ENCODE measurements at regions of chr19 and their contacts with region 1.

Region 1: DNA sequence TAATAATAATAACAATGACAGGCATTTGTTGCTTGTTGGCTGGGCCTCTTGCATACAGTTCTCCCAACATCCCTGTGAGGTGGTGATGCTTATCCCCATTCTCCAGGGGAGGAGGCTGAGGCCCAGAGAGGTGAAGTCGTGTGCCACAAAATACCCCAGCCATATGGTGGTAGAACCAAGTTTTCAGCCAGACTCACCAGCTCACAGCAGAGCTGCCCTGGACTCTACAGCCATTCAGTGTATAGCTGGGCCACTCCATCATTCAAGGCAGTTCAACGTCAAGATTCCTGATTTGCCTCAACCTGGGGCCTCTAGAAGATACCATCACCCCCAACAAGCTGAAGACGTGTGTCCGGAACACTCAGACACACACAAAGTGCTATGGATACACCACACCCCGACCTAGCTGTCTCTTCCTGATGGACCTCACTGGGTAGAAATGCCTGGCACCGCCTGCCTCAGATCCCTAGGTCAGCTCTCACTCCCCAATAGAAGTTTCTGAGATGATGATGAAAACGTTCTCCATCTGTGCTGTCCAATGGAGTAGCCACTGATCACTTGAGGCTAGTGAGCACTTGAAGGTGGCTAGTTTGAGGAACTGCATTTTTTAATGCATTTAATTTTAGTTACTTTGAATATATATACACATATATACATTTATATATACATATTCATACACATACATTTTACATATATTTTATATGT is 4.3 kb upstream of the CEACAM19 start:
- DNase-seq: no peak
- ATAC-seq: 0 out of 2 replicates have a peak, but pooled peaks have one; percentile 22
- H3K4me3 ChIP-seq: no peak overlapping the region
- H3K27ac ChIP-seq: no peak overlapping the region
- H3K4me1 ChIP-seq: no peaks in the 10 kb centered on the region
- H3K27me3 ChIP-seq: no peaks in the 10 kb centered on the region
- CTCF ChIP-seq: no peak

Region 2: GRCh38 chr19:43700395-43701000 is 966.5 kb before region 1 on chr19:
- CTCF ChIA-PET with region 1: no interaction called
- POLR2A ChIA-PET with region 1: no interaction called
- in situ Hi-C with region 1: no loop called
- intact Hi-C with region 1: no loop called
- DNase-seq: no peak
- ATAC-seq: peak; percentile 64
- H3K4me3 ChIP-seq: peak overlapping the region in 1 of 2 experiments; percentile 41; a peak in 3 of 4 replicates
- H3K27ac ChIP-seq: peak overlapping the region; percentile 63
- H3K4me1 ChIP-seq: peaks cover 5% of the 10 kb centered on the region
- H3K27me3 ChIP-seq: no peaks in the 10 kb centered on the region
- CTCF ChIP-seq: no peak

Region 3: DNA sequence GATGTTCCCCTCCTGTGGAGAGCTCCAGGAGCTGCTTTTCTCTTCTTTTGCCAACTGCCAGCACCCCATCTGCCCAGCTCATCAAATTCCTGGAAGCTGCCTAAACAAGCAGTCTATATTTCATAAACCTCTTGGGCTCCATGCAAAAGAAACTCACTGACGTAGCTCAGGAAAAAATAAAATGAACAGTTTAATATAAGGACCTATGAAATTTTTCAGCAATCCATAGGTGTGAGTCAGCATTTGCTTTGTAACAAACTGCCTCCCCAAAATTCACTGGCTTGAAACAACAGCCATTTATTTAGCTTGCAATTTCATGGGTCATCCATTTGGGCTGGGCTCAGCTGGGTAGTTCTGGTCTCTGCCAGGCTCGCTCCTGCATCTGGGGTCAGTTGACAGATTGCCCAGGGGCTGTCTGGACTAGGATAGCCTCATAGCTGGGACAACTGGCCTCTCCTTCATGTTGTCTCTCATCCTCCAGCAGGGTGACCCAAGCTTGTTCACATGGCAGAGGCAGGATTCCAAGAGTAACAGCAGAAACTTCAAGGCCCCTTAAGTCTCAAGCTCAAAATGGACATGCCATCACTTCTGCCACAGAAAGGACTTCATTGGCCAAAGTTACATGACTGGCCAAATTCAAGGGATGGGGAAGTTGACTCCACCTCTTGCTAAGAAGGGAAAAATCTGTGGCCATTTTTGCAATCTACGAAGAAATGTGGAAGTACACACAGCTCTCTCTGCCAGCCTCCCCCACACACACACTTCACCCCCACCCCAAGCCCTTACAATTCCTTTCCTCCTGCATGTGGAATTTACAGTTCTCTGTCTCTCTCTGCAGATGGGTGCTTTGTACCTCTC is 31.2 kb before region 1 on chr19:
- CTCF ChIA-PET with region 1: no interaction called
- POLR2A ChIA-PET with region 1: interaction called, 11 read pairs
- in situ Hi-C with region 1: no loop called
- intact Hi-C with region 1: no loop called
- DNase-seq: no peak
- ATAC-seq: no peak
- H3K4me3 ChIP-seq: no peak overlapping the region
- H3K27ac ChIP-seq: no peak overlapping the region
- H3K4me1 ChIP-seq: no peaks in the 10 kb centered on the region
- H3K27me3 ChIP-seq: no peaks in the 10 kb centered on the region
- CTCF ChIP-seq: no peak

Region 4: DNA sequence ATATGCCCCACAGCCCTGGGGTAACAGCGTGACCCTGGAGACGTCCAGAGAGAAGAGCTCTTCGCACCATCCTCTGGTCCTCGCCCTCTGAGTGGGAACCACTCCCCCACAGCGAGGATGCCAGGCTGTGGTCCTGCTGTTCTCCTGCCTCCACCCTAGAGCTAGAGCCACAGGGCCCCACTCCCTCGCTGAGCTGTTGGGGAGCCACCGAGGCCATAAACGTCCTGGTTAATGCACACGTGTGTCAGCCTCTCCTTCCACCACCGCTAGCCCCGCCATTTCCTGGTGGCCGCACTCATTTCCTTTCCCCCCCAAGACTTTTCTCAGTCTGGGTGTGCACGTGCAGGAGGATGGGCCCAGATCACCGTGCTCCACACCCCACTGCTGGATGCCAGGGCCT is 43.5 kb after region 1 on chr19:
- CTCF ChIA-PET with region 1: no interaction called
- POLR2A ChIA-PET with region 1: no interaction called
- in situ Hi-C with region 1: no loop called
- intact Hi-C with region 1: no loop called
- DNase-seq: no peak
- ATAC-seq: no peak
- H3K4me3 ChIP-seq: no peak overlapping the region
- H3K27ac ChIP-seq: no peak overlapping the region
- H3K4me1 ChIP-seq: no peaks in the 10 kb centered on the region
- H3K27me3 ChIP-seq: no peaks in the 10 kb centered on the region
- CTCF ChIP-seq: no peak